ENCODE measurements at regions of chr4 and their contacts with region 1.

Region 1: GRCh38 chr4:128863312-128864075 is 54.0 kb downstream of the JADE1 start:
- DNase-seq: peak; percentile 89

Region 2: DNA sequence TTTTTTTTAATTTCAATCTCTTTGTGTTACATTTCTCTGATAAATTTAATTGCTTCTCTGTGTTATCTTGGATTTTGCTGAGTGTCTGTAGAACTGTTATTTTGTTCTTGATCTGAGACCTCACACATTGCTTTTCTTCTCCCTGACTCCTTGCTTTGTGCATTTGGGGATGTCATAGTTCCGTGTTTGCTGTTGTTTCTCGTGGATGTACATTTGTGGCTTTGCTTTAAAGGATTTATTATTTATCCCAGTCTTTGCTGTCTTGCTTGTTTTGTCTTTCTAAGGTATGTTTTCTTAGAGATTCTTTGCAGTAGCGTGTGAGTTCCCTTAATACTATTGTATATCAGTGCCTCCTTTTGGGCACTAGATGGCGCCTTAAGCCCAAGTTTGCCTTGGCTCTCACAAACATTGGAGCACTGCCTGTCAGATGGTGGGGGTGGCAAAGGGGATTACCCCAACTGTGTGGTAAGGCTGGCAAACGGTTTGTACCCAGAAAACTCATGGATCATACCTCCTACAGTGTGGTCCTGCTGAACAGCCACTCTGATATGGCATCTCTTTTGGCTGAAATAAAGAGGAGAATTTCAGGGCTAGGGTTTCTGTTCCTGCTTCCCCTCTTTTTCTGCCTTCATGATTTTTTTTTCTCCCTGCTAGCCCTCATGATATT is 672.2 kb before region 1 on chr4:
- intact Hi-C with region 1: loop called (anchors 5 kb)
- DNase-seq: peak; percentile 79

Region 3: DNA sequence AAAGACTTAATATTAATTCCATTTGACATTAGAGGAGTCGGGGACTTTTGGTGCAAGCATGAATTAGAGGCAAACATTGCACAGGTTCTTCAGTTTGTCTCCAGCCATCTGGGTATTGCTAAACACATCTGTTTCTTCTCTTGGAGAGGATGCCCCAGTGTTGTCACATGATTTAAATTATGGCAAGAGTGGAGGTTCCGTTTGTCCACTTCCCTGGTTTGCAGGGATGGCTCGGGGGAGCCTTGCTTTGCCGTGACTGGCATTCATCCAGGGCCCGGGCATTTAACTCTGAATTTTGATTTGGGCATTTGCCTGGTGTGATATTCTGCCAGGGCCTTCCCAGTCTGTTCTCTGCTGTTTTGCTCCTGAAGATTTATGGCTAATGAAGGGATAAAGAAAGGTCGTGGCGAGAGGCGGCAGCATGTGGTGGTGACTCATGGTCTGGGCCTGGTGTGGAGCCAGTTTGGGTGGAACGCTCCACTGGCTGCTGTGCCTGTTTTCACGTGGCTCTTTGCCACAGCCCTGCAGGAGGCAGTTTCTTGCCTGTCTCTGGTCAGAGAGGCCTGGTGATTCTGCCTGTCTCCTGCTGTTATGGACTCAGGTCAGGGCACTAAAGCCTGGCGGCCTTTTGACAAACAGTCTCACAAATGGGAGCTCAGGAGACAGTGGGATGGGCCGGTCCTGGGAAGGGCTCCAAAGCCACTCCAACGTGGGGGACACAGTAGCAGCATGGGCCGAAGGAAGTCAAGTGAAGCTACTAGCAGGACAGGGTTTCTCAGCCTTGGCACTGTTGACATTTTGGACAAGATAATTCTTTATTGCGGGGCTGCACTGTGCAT is 476.5 kb before region 1 on chr4:
- intact Hi-C with region 1: loop called (anchors 5 kb)
- DNase-seq: peak; percentile 91

Region 4: DNA sequence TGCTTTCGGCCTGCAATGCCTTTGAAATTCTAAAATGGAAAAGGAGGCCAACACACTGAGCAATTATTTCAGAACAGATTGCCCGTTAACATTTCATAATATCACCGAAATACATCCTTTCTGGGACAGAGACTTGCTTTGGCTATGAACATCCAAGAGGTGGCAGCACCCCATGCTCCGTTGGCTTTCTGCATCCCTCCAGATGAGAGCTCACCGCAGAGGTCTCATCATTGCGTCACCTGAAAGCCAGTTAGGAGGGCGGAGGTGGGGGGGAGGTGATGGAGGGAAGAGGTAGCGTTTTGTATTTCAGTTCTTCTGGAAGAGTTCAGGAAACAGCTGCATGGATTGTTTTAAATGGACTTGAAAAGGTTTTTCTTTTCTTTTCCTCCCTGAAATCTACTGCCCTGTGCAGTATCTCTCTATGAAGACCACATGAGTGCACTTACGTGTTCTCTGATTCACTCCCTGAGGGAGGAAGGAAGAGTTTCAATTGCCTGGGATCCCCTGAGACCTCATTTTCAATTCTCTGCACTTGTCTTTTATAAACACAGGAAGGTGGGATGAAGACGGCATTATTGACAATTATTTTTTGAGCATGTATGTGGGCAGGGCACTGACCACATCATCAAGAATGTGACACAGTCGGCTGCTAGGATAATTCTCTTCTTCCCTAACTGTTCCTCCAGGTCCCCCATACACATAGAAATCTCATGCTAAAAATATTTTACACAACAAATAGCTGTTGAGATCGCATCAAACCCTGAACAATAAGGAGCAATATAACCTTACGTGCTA is 409.0 kb before region 1 on chr4:
- intact Hi-C with region 1: loop called (anchors 5 kb)
- DNase-seq: peak; percentile 82

Region 5: GRCh38 chr4:128835498-128836222 is 27.8 kb before region 1 on chr4:
- intact Hi-C with region 1: loop called (anchors 2 kb)
- DNase-seq: peak; percentile 87